Activated CD4-positive, alpha-beta memory T cell treated with anti-CD3 and anti-CD28 coated beads for 36 hours (primary cell): ENCODE measurements at regions of chr7 and their contacts with region 1.

Region 1: GRCh38 chr7:113118074-113118959 is at the start of gene SMIM30:
- DNase-seq: peak; percentile 92
- H3K4me3 Mint-ChIP-seq: peak within 1 kb of the TSS; percentile 85
- H3K27ac Mint-ChIP-seq: peak within 1 kb of the TSS; percentile 87
- H3K4me1 Mint-ChIP-seq: peaks cover 38% of the 10 kb centered on the region
- H3K27me3 Mint-ChIP-seq: no peaks in the 10 kb centered on the region
- total RNA-seq, gene SMIM30: 37.5 to 41.5 TPM

Region 2: DNA sequence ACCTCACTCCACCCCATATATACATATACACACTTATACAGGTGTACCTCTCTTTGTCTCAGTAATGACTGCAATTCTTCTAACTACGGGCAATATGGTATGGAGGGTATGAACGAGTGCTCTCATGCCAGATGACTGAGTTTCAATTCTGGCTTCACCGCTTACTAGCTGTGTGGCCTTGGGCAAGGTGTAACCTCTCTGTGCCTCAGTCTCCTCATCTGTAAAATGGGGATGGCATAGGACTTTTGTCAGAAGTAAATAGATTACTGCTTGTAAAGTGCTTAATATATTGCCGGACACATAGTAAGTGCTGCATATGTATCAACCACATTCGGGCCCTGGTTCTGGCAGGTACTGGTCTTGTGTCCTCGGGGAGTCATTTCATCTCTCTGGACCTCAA is 728.1 kb before region 1 on chr7:
- CTCF ChIA-PET with region 1: no interaction called
- POLR2A ChIA-PET with region 1: no interaction called
- intact Hi-C with region 1: loop called (anchors 5 kb)
- DNase-seq: no peak
- H3K4me3 Mint-ChIP-seq: no peak overlapping the region
- H3K27ac Mint-ChIP-seq: no peak overlapping the region
- H3K4me1 Mint-ChIP-seq: peaks cover 5% of the 10 kb centered on the region
- H3K27me3 Mint-ChIP-seq: no peaks in the 10 kb centered on the region

Region 3: GRCh38 chr7:112556633-112557032 is 561.7 kb before region 1 on chr7:
- CTCF ChIA-PET with region 1: no interaction called
- POLR2A ChIA-PET with region 1: no interaction called
- intact Hi-C with region 1: loop called (anchors 5 kb)
- DNase-seq: peak; percentile 37
- H3K4me3 Mint-ChIP-seq: no peak overlapping the region
- H3K27ac Mint-ChIP-seq: no peak overlapping the region
- H3K4me1 Mint-ChIP-seq: peaks cover 17% of the 10 kb centered on the region
- H3K27me3 Mint-ChIP-seq: no peaks in the 10 kb centered on the region

Region 4: GRCh38 chr7:112789817-112790585 is 328.3 kb before region 1 on chr7 and contains the start of gene TMEM168:
- CTCF ChIA-PET with region 1: no interaction called
- POLR2A ChIA-PET with region 1: no interaction called
- intact Hi-C with region 1: loop called (anchors 2 kb)
- DNase-seq: peak; percentile 90
- H3K4me3 Mint-ChIP-seq: peak within 1 kb of the TSS; percentile 98
- H3K27ac Mint-ChIP-seq: peak within 1 kb of the TSS; percentile 85
- H3K4me1 Mint-ChIP-seq: peaks cover 44% of the 10 kb centered on the region
- H3K27me3 Mint-ChIP-seq: no peaks in the 10 kb centered on the region
- total RNA-seq, gene TMEM168: 16.1 to 17.4 TPM

Region 5: GRCh38 chr7:112939574-112940314 is 178.6 kb before region 1 on chr7:
- CTCF ChIA-PET with region 1: no interaction called
- POLR2A ChIA-PET with region 1: no interaction called
- intact Hi-C with region 1: loop called (anchors 1 kb)
- DNase-seq: peak; percentile 100
- H3K4me3 Mint-ChIP-seq: peak overlapping the region; percentile 87
- H3K27ac Mint-ChIP-seq: peak overlapping the region; percentile 93
- H3K4me1 Mint-ChIP-seq: peaks cover 34% of the 10 kb centered on the region
- H3K27me3 Mint-ChIP-seq: peaks cover 2% of the 10 kb centered on the region

Region 6: GRCh38 chr7:113086431-113086888 is 31.9 kb before region 1 on chr7 and contains the start of gene GPR85:
- CTCF ChIA-PET with region 1: no interaction called
- POLR2A ChIA-PET with region 1: no interaction called
- intact Hi-C with region 1: loop called (anchors 2 kb)
- DNase-seq: peak; percentile 36
- H3K4me3 Mint-ChIP-seq: peak within 1 kb of the TSS; percentile 43
- H3K27ac Mint-ChIP-seq: no peak within 1 kb of the TSS
- H3K4me1 Mint-ChIP-seq: peaks cover 5% of the 10 kb centered on the region
- H3K27me3 Mint-ChIP-seq: peaks cover 39% of the 10 kb centered on the region
- total RNA-seq, gene GPR85: not detected